ENCODE measurements at regions of chr7 and their contacts with region 1.

Region 1: GRCh38 chr7:95874541-95875265 is 102.3 kb downstream of the DYNC1I1 start:
- DNase-seq: no peak
- H3K4me3 ChIP-seq: no peak overlapping the region
- H3K27ac ChIP-seq: no peak overlapping the region
- H3K4me1 ChIP-seq: peaks cover 0 to 20% of the 10 kb centered on the region in 2 donors
- H3K27me3 ChIP-seq: no peaks in the 10 kb centered on the region
- CTCF ChIP-seq: no peak
- POLR2A ChIP-seq: no peak

Region 2: GRCh38 chr7:95660023-95660434 is 214.7 kb before region 1 on chr7:
- intact Hi-C with region 1: no loop called
- DNase-seq: no peak
- H3K4me3 ChIP-seq: no peak overlapping the region
- H3K27ac ChIP-seq: no peak overlapping the region
- H3K4me1 ChIP-seq: peaks cover 0 to 5% of the 10 kb centered on the region in 2 donors
- H3K27me3 ChIP-seq: no peaks in the 10 kb centered on the region
- CTCF ChIP-seq: no peak
- POLR2A ChIP-seq: no peak

Region 3: GRCh38 chr7:95723592-95724180 is 151.0 kb before region 1 on chr7:
- intact Hi-C with region 1: loop called (anchors 5 kb)
- DNase-seq: peak; percentile 34 to 49
- H3K4me3 ChIP-seq: no peak overlapping the region
- H3K27ac ChIP-seq: no peak overlapping the region
- H3K4me1 ChIP-seq: no peaks in the 10 kb centered on the region
- H3K27me3 ChIP-seq: no peaks in the 10 kb centered on the region
- CTCF ChIP-seq: peak in 5 of 6 experiments; percentile 28 to 72 (median 65)
- POLR2A ChIP-seq: no peak